IMR-90 (cell line): ENCODE measurements at regions of chr6 and their contacts with region 1.

Region 1: GRCh38 chr6:106979427-106979884 is 4.9 kb upstream of the CD24 start:
- DNase-seq: peak; percentile 76
- ATAC-seq: peak; percentile 84
- H3K4me3 ChIP-seq: no peak overlapping the region
- H3K27ac ChIP-seq: no peak overlapping the region
- H3K4me1 ChIP-seq: no peaks in the 10 kb centered on the region
- H3K27me3 ChIP-seq: peaks cover 33% of the 10 kb centered on the region
- CTCF ChIP-seq: peak; percentile 97
- POLR2A ChIP-seq: no peak
- RAD21 ChIP-seq: peak; percentile 94

Region 2: DNA sequence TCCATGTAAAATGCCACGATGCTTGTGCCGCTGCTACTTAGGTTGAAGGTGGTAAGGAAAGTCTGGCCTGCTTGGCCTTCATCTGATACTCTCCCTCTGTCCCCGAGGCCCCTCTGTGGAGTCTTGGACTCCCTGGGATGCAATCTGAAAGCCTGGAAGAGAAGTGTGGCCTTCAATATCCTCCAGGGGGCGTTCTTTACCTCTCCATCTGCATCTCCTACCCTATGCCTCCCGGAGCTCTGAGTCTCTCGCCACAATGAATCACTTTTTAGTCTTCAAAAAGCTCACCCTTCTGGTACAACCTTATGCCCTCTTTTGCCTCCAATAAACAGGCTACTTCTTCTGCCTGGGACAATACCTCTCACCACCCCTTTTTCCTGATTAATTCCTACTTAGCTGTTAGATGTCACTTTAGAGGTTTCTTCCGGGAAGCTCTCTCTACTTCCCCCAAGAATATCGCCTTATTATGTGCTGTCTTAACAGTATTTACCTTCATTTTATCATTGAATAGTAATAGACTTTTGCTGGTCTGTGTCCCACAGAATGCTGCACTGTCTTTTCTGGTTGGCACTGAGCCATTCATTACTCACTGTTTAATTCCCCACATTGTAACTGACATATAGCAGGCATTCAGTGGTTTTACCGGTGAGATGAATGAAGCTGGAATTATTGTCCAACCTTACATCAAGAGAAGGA is 640.0 kb before region 1 on chr6:
- CTCF ChIA-PET with region 1: interaction called, 7 read pairs
- POLR2A ChIA-PET with region 1: no interaction called
- dilution Hi-C with region 1: no loop called
- in situ Hi-C with region 1: loop called (anchors 25 kb)
- intact Hi-C with region 1: loop called (anchors 1 kb)
- DNase-seq: peak; percentile 70
- ATAC-seq: peak; percentile 99
- H3K4me3 ChIP-seq: no peak overlapping the region
- H3K27ac ChIP-seq: no peak overlapping the region
- H3K4me1 ChIP-seq: no peaks in the 10 kb centered on the region
- H3K27me3 ChIP-seq: peaks cover 9% of the 10 kb centered on the region
- CTCF ChIP-seq: peak; percentile 73
- POLR2A ChIP-seq: no peak
- RAD21 ChIP-seq: peak; percentile 59

Region 3: GRCh38 chr6:106444777-106445507 is 534.5 kb before region 1 on chr6:
- CTCF ChIA-PET with region 1: interaction called, 7 read pairs
- POLR2A ChIA-PET with region 1: no interaction called
- dilution Hi-C with region 1: loop called (anchors 25 kb)
- in situ Hi-C with region 1: loop called (anchors 5 kb)
- intact Hi-C with region 1: loop called (anchors 1 kb)
- DNase-seq: peak; percentile 69
- ATAC-seq: peak; percentile 75; the same call in 1 of the 2 replicates
- H3K4me3 ChIP-seq: no peak overlapping the region
- H3K27ac ChIP-seq: no peak overlapping the region
- H3K4me1 ChIP-seq: no peaks in the 10 kb centered on the region
- H3K27me3 ChIP-seq: peaks cover 18% of the 10 kb centered on the region
- CTCF ChIP-seq: peak; percentile 73
- POLR2A ChIP-seq: no peak
- RAD21 ChIP-seq: peak; percentile 78

Region 4: GRCh38 chr6:106512048-106512967 is 467.1 kb before region 1 on chr6:
- CTCF ChIA-PET with region 1: no interaction called
- POLR2A ChIA-PET with region 1: no interaction called
- dilution Hi-C with region 1: no loop called
- in situ Hi-C with region 1: no loop called
- intact Hi-C with region 1: loop called (anchors 5 kb)
- DNase-seq: no peak
- ATAC-seq: peak; percentile 70
- H3K4me3 ChIP-seq: peak overlapping the region; percentile 52
- H3K27ac ChIP-seq: no peak overlapping the region
- H3K4me1 ChIP-seq: peaks cover 7% of the 10 kb centered on the region; the same call in 1 of the 2 replicates
- H3K27me3 ChIP-seq: peaks cover 30% of the 10 kb centered on the region
- CTCF ChIP-seq: peak; percentile 30
- POLR2A ChIP-seq: no peak
- RAD21 ChIP-seq: no peak

Region 5: DNA sequence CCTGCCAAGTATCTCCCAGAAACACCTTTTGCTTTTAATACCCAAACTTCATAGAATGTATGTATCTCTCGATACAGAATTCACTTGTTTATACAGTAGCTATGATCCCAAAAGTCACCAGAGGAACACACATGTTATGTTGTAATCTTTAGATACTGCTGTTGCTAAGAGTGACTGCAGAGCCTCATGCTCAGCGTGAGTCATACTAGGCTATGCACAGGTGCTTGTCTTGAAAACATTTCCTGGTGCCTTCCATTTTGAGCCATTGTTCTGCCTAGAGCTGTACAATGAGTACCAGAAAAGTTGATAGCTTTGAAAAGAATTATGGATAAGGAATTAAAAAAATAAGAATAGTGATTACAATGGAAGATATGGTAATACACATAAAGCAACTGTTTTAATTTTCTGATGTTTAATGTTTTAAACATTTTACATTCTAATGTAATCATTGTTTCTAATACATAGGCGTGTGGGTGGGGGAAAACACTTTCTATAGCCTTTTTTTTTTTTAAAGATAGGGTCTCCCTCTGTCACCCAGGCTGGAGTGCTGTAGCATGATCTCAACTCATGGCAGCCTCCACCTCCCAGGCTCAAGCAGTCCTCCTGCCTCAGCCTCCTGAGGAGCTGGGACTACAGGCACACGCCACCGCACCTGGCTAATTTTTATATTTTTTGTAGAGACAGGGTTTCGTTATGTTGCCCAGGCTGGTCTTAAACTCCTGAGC is 84.3 kb before region 1 on chr6:
- CTCF ChIA-PET with region 1: no interaction called
- POLR2A ChIA-PET with region 1: no interaction called
- dilution Hi-C with region 1: no loop called
- in situ Hi-C with region 1: no loop called
- intact Hi-C with region 1: no loop called
- DNase-seq: peak; percentile 11
- ATAC-seq: no peak
- H3K4me3 ChIP-seq: no peak overlapping the region
- H3K27ac ChIP-seq: no peak overlapping the region
- H3K4me1 ChIP-seq: no peaks in the 10 kb centered on the region
- H3K27me3 ChIP-seq: peaks cover 5% of the 10 kb centered on the region; the same call in 1 of the 2 replicates
- CTCF ChIP-seq: no peak
- POLR2A ChIP-seq: no peak
- RAD21 ChIP-seq: no peak

Region 6: DNA sequence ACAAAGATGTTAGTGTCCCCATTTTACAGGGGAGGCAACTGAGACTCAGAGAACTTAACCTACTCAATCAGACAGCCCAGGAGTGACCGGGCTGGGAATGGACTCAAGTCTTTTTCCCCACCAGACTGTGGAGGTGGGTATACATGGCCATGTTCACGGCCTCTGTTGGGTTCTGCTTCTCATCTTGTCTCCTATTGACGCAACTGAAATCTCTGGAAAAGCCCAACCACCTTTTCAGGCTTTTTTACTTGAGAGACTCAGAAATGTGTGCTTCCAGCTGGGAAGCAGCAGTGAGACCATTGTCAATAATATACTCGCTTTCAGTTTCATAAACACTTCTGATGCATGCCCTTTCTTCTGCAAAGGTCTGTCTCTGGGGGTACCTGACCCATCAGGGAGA is 581.2 kb after region 1 on chr6:
- CTCF ChIA-PET with region 1: no interaction called
- POLR2A ChIA-PET with region 1: no interaction called
- dilution Hi-C with region 1: no loop called
- in situ Hi-C with region 1: no loop called
- intact Hi-C with region 1: no loop called
- DNase-seq: peak; percentile 6
- ATAC-seq: no peak
- H3K4me3 ChIP-seq: no peak overlapping the region
- H3K27ac ChIP-seq: no peak overlapping the region
- H3K4me1 ChIP-seq: no peaks in the 10 kb centered on the region
- H3K27me3 ChIP-seq: no peaks in the 10 kb centered on the region
- CTCF ChIP-seq: no peak
- POLR2A ChIP-seq: no peak
- RAD21 ChIP-seq: no peak